ENCODE measurements at regions of chr10 and their contacts with region 1.

Region 1: GRCh38 chr10:16559236-16559773 is 37.6 kb upstream of the C1QL3 start:
- DNase-seq: no peak
- ATAC-seq: no peak
- H3K4me3 Mint-ChIP-seq: no peak overlapping the region
- H3K27ac Mint-ChIP-seq: no peak overlapping the region
- H3K4me1 Mint-ChIP-seq: 0 out of 2 replicates have a peak, but pooled peaks cover 3% of the 10 kb centered on the region
- H3K27me3 Mint-ChIP-seq: peaks cover 12% of the 10 kb centered on the region
- CTCF ChIP-seq: no peak

Region 2: DNA sequence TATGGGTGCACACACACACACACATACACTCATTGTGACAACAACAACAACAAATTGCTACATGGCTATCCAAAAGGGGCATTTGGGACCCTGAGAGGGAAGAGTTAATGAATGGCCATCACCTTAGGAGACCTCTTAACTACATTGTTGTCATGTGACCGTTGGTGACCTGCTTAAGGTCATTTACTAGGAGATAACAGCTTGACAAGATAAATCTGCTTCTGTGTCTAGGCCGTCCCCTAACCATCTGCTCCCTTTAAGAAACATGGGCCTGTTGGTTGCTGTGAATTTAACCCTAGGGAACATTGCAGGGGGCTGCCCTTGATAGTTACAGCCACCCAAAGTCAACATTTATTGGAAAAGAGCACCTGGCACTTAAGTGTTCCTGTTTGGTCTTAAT is 67.4 kb before region 1 on chr10:
- CTCF ChIA-PET with region 1: no interaction called
- POLR2A ChIA-PET with region 1: no interaction called
- DNase-seq: no peak
- ATAC-seq: no peak
- H3K4me3 Mint-ChIP-seq: no peak overlapping the region
- H3K27ac Mint-ChIP-seq: no peak overlapping the region
- H3K4me1 Mint-ChIP-seq: no peaks in the 10 kb centered on the region
- H3K27me3 Mint-ChIP-seq: no peaks in the 10 kb centered on the region
- CTCF ChIP-seq: no peak

Region 3: GRCh38 chr10:16545116-16545736 is 14.1 kb before region 1 on chr10:
- CTCF ChIA-PET with region 1: interaction called, 11 read pairs
- POLR2A ChIA-PET with region 1: no interaction called
- DNase-seq: no peak
- ATAC-seq: peak; percentile 75
- H3K4me3 Mint-ChIP-seq: no peak overlapping the region
- H3K27ac Mint-ChIP-seq: no peak overlapping the region
- H3K4me1 Mint-ChIP-seq: no peaks in the 10 kb centered on the region
- H3K27me3 Mint-ChIP-seq: peaks cover 8% of the 10 kb centered on the region
- CTCF ChIP-seq: peak; percentile 58; the same call in 1 of the 2 replicates